Activated T-helper 1 cell treated with anti-CD3 and anti-CD28 coated beads, Interleukin-12 subunit alpha, Interleukin-12 subunit beta, Interleukin-2, Interleukin-4 antibody, amounts not matched to agents 30 ng/mL and 10 ng/mL and 1 ng/mL, durations not matched to agents 14 hours and 24 hours and 36 hours (primary cell): ENCODE measurements at regions of chr18 and their contacts with region 1.

Region 1: GRCh38 chr18:45664824-45665763 is 49.8 kb downstream of the SLC14A2 start:
- DNase-seq: peak; percentile 44
- H3K4me3 Mint-ChIP-seq: no peak overlapping the region
- H3K27ac Mint-ChIP-seq: no peak overlapping the region
- H3K4me1 Mint-ChIP-seq: peaks cover 52% of the 10 kb centered on the region
- H3K27me3 Mint-ChIP-seq: peaks cover 12% of the 10 kb centered on the region

Region 2: DNA sequence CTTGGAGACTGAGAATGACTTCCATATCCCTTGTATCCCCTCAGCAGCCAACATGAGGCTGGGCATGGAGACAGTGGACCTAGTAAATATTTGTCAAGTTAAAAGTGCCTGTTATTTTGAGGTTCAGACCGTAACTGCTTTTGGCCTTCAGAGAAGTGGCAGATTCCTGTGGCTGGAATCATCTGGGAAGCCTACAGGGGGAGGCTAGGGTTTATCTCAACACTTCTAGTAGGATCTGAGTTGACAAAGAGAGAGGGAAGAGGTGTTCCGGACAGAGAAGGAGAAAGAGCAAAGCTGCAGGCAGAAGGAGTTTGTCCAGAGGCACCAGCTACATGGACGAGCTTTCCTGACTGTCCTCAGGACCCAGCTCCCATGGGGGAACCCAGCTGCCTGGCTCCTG is 22.9 kb before region 1 on chr18:
- intact Hi-C with region 1: no loop called
- DNase-seq: no peak
- H3K4me3 Mint-ChIP-seq: no peak overlapping the region
- H3K27ac Mint-ChIP-seq: no peak overlapping the region
- H3K4me1 Mint-ChIP-seq: no peaks in the 10 kb centered on the region
- H3K27me3 Mint-ChIP-seq: peaks cover 15% of the 10 kb centered on the region

Region 3: GRCh38 chr18:45722899-45723298 is 57.8 kb after region 1 on chr18:
- intact Hi-C with region 1: loop called (anchors 1 kb)
- DNase-seq: peak; percentile 54
- H3K4me3 Mint-ChIP-seq: no peak overlapping the region
- H3K27ac Mint-ChIP-seq: no peak overlapping the region
- H3K4me1 Mint-ChIP-seq: no peaks in the 10 kb centered on the region
- H3K27me3 Mint-ChIP-seq: peaks cover 21% of the 10 kb centered on the region

Region 4: GRCh38 chr18:45755934-45756333 is 90.8 kb after region 1 on chr18:
- intact Hi-C with region 1: no loop called
- DNase-seq: no peak
- H3K4me3 Mint-ChIP-seq: no peak overlapping the region
- H3K27ac Mint-ChIP-seq: no peak overlapping the region
- H3K4me1 Mint-ChIP-seq: no peaks in the 10 kb centered on the region
- H3K27me3 Mint-ChIP-seq: peaks cover 17% of the 10 kb centered on the region

Region 5: GRCh38 chr18:45879681-45880655 is 214.9 kb after region 1 on chr18:
- intact Hi-C with region 1: loop called (anchors 1 kb)
- DNase-seq: peak; percentile 64
- H3K4me3 Mint-ChIP-seq: no peak overlapping the region
- H3K27ac Mint-ChIP-seq: no peak overlapping the region
- H3K4me1 Mint-ChIP-seq: peaks cover 14% of the 10 kb centered on the region
- H3K27me3 Mint-ChIP-seq: no peaks in the 10 kb centered on the region

Region 6: GRCh38 chr18:45967007-45967706 is 302.1 kb after region 1 on chr18 and contains the start of gene EPG5:
- intact Hi-C with region 1: loop called (anchors 2 kb)
- DNase-seq: peak; percentile 93
- H3K4me3 Mint-ChIP-seq: peak within 1 kb of the TSS; percentile 97
- H3K27ac Mint-ChIP-seq: peak within 1 kb of the TSS; percentile 91
- H3K4me1 Mint-ChIP-seq: peaks cover 38% of the 10 kb centered on the region
- H3K27me3 Mint-ChIP-seq: peaks cover 2% of the 10 kb centered on the region
- total RNA-seq, gene EPG5: 14.3 and 14.6 TPM in 2 replicates

Region 7: DNA sequence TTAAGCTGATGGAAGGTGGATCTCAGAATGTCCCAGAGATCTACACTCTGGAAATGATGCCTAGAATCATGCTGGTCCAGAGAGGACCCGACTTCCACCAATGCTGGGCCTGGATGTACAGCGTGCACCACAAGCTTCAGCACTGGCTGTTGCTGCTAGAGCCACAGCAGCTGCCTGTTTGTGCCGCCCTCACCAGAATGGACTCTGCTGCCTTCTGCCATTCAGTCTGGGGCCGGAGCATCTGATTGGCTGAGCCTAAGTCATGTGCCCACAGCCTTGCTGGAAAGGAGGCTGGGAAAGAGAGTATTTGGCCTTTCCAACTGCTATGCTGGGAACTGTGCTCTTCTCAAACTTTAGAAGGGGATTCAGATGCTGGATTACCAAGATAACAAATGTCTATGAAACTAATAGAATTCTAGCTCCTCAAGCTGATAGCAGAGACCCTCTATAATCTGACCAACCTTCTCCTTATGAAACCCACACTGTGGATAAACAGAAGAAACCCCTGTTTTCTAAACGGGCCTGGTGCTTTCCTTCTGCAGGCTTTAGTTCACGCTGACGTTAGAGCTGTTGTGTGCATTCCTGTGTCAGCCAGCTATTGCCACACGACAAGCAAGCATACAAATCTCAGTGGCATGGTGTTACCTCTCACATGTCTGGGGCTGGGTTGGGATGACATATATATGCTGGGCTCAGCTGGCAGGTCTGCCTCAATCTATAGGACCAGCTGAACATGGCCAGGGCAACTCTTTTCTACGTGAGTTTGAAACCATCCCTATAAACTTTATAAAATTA is 996.1 kb after region 1 on chr18:
- intact Hi-C with region 1: loop called (anchors 10 kb)
- DNase-seq: no peak
- H3K4me3 Mint-ChIP-seq: no peak overlapping the region
- H3K27ac Mint-ChIP-seq: no peak overlapping the region
- H3K4me1 Mint-ChIP-seq: no peaks in the 10 kb centered on the region
- H3K27me3 Mint-ChIP-seq: peaks cover 3% of the 10 kb centered on the region